K562 (cell line): ENCODE measurements at regions of chr12 and their contacts with region 1.

Region 1: DNA sequence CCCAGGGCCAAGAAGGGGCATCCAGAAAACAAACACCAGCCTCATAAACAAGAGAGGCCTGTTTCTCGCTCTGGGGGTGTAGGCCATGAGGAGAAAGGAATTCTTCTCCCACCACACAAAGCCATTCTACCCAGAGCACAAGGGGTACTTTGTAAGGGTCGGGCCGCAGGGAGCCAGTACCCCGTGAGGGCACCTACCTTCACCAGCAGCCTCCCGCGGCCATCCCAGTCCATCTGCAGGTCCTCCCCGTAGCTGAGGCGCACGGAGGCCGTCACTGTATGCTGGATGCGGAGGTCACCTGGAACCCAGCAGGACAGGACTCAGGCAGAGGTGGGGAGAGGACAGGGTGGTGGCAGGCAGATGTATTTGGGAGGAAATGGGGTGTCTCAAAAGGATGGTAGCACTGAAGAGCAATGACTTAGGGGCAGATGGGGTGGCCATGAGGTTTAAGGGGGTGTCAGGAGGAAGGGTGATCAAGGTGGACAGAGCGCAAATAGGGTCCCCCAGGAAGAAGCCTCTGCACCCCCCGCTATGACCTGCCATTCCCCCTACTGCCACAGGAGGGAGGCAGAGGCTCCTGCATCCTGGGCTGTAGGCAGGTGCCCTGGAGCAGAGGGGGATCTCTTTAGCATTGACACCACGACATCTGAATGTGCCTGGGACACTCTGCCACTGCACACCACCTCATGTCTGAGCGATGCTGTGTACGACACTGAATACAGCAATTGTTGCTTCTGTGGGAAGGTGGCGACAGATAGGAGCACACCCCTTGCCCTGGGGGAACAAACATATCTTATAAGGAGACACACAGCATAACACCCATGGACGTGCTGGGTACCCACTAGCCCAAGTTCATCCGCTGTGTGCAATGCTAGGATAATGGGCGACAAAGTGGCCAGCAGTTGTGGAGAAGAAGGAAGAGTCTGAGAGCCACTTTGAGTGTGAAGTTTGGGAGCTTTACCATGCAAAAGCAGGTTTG is 61.4 kb downstream of the VWF start:
- DNase-seq: peak; percentile 43 to 71 (median 71)
- ATAC-seq: peak; percentile 93
- H3K4me3 ChIP-seq: no peak overlapping the region
- H3K27ac ChIP-seq: no peak overlapping the region
- H3K4me1 ChIP-seq: no peaks in the 10 kb centered on the region
- H3K27me3 ChIP-seq: peaks cover 4 to 30% of the 10 kb centered on the region in 2 experiments; a peak in 3 of 5 replicates
- CTCF ChIP-seq: peak; percentile 79 to 85 (median 82)
- EP300 ChIP-seq: no peak
- POLR2A ChIP-seq: no peak
- RAD21 ChIP-seq: peak; percentile 69 to 88

Region 2: DNA sequence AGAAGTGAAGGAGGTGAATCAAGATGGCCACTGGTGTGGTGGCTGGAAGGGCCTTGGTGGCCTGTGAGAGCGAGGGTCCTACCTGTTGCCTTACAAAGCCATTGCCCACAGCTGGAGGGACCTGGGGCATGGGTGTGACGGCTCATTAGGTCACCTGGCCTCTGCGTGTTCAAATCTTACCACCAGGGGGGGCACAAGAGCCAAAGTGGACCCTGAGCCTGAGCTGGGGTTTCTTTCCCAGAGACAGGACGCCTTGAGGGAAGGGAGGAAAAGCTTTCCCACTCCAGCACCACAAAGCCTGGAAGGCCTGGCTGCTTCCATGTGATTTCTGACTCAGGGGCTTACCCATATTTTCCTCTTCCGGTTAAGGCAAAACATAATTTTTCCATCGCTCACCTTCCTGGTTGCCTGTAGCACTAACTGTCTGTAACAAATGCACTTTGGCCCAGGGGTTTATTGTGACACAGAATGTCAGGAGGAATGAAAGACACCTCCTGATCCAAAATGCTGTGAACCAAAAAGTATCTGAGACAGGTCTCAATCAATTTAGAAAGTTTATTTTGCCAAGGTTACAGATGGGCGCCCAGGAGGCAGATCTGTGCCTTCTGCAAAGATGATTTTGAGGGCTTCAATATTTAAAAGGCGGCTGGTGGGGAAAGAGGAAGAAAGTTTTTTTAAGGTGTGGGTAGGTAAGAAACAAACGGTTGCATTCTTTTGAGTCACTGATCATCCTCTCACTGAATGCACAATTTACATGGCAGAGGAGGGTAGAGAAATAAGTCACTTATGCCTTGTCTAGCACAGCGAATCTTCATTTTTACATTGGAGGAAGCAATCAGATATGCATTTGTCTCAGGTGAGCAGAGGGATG is 132.9 kb after region 1 on chr12:
- CTCF ChIA-PET with region 1: no interaction called
- POLR2A ChIA-PET with region 1: no interaction called
- in situ Hi-C with region 1: loop called (anchors 10 kb)
- intact Hi-C with region 1: loop called (anchors 2 kb)
- DNase-seq: peak; percentile 73 to 83 (median 80)
- ATAC-seq: peak; percentile 96
- H3K4me3 ChIP-seq: no peak overlapping the region
- H3K27ac ChIP-seq: no peak overlapping the region
- H3K4me1 ChIP-seq: peaks cover 0 to 11% of the 10 kb centered on the region in 2 experiments; a peak in 3 of 5 replicates
- H3K27me3 ChIP-seq: peaks cover 11 to 43% of the 10 kb centered on the region in 2 experiments; a peak in 4 of 5 replicates
- CTCF ChIP-seq: peak; percentile 80 to 82 (median 80)
- EP300 ChIP-seq: no peak
- POLR2A ChIP-seq: no peak
- RAD21 ChIP-seq: peak; percentile 75 to 86

Region 3: GRCh38 chr12:6226002-6226678 is 163.1 kb after region 1 on chr12:
- CTCF ChIA-PET with region 1: no interaction called
- POLR2A ChIA-PET with region 1: no interaction called
- in situ Hi-C with region 1: no loop called
- intact Hi-C with region 1: no loop called
- DNase-seq: no peak
- ATAC-seq: no peak
- H3K4me3 ChIP-seq: no peak overlapping the region
- H3K27ac ChIP-seq: no peak overlapping the region
- H3K4me1 ChIP-seq: peaks cover 2 to 5% of the 10 kb centered on the region in 2 experiments; a peak in 4 of 5 replicates
- H3K27me3 ChIP-seq: peaks cover 25 to 73% of the 10 kb centered on the region in 2 experiments
- CTCF ChIP-seq: no peak
- EP300 ChIP-seq: no peak
- POLR2A ChIP-seq: no peak
- RAD21 ChIP-seq: no peak

Region 4: DNA sequence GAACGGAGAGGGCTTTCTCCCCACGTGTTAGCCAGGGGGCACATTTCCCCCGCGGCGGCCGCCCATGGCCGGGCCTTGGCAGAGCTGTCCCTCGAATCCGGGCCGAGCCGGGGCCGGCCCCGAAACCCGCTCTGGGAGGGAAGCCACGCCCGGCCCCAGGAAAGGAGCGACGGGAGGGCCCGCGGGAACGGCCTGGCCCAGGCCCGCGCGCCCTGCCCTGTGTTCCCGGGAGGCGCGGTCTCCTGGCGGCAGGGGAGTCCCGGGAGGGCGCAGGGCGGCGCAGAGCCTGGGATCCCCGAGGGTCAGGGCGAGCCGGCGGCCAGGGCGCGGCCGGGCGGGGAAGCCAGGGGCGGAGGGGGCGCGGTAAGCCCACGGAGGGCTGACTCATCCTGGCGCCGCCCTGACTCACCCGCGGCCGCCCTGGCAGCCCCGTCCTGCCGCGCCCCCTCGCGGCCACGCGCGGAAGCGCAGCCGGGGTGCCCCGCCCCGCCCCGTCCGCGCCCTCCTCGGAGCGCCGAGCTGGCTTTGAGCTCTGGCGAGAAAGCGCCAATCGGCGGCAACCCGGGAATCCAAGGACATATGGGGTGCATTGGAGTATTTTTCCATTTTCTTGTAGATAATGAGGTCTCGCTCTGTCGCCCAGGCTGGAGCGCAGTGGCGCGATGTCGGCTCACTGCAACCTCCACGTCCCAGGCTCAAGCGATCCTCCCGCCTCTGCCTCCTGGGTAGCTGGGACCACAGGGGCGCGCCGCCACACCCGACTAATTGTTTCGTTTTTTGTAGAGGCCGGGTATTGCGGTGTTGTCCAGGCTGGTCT is 215.6 kb after region 1 on chr12:
- CTCF ChIA-PET with region 1: interaction called, 14 read pairs
- POLR2A ChIA-PET with region 1: interaction called, 3 read pairs
- in situ Hi-C with region 1: loop called (anchors 5 kb)
- intact Hi-C with region 1: no loop called
- DNase-seq: peak; percentile 84 to 93 (median 90)
- ATAC-seq: peak; percentile 99
- H3K4me3 ChIP-seq: peak overlapping the region; percentile 40
- H3K27ac ChIP-seq: peak overlapping the region; percentile 25; the same call in 2 of the 3 replicates
- H3K4me1 ChIP-seq: peaks cover 6 to 20% of the 10 kb centered on the region in 2 experiments; a peak in 4 of 5 replicates
- H3K27me3 ChIP-seq: peaks cover 6 to 7% of the 10 kb centered on the region in 2 experiments; a peak in 4 of 5 replicates
- CTCF ChIP-seq: peak; percentile 58 to 84 (median 75)
- EP300 ChIP-seq: 0 out of 2 replicates have a peak, but pooled peaks have one; percentile 10
- POLR2A ChIP-seq: no peak
- RAD21 ChIP-seq: peak; percentile 88 to 92

Region 5: DNA sequence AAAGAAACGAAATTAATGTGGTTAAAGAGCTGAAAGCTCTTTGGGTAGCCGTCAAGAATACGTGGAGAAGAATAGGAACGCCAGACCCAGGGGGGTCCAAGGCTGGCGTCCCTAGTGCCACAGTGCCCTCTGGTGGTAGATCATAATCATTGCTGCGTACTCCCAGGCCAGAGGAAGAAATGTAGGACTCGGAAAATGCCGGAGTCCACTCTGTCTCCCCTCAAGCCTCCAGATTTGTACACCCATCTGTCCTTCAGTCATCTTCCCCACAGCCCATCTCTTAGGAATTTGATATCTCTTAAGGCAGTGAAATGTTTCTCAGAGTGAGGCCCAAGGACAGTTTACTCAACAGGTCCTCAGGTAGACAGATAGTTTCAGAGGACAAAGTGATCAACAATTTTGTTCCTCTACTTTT is 222.0 kb after region 1 on chr12:
- CTCF ChIA-PET with region 1: interaction called, 15 read pairs
- POLR2A ChIA-PET with region 1: interaction called, 3 read pairs
- in situ Hi-C with region 1: no loop called
- intact Hi-C with region 1: loop called (anchors 1 kb)
- DNase-seq: peak; percentile 74 to 81 (median 77)
- ATAC-seq: peak; percentile 98
- H3K4me3 ChIP-seq: no peak overlapping the region
- H3K27ac ChIP-seq: no peak overlapping the region
- H3K4me1 ChIP-seq: no peaks in the 10 kb centered on the region; a peak in 2 of 5 replicates
- H3K27me3 ChIP-seq: peaks cover 0 to 6% of the 10 kb centered on the region in 2 experiments; a peak in 1 of 5 replicates
- CTCF ChIP-seq: peak; percentile 83 to 92 (median 83)
- EP300 ChIP-seq: no peak
- POLR2A ChIP-seq: no peak
- RAD21 ChIP-seq: peak; percentile 90 to 94